Activated B cell treated with CpG ODN at 0.5 μM for 24 hours (primary cell): ENCODE measurements at regions of chr2 and their contacts with region 1.

Region 1: GRCh38 chr2:135985018-135985825 is at the start of gene DARS1:
- DNase-seq: peak; percentile 80
- ATAC-seq: peak; percentile 86
- H3K4me3 Mint-ChIP-seq: peak within 1 kb of the TSS; percentile 95
- H3K27ac Mint-ChIP-seq: peak within 1 kb of the TSS; percentile 97
- H3K4me1 Mint-ChIP-seq: peaks cover 50% of the 10 kb centered on the region
- H3K27me3 Mint-ChIP-seq: no peaks in the 10 kb centered on the region
- CTCF ChIP-seq: no peak
- total RNA-seq, gene DARS1: 96.3 and 103 TPM in 2 replicates

Region 2: GRCh38 chr2:135531231-135532228 is 453.7 kb before region 1 on chr2 and contains the start of gene R3HDM1:
- CTCF ChIA-PET with region 1: no interaction called
- POLR2A ChIA-PET with region 1: no interaction called
- intact Hi-C with region 1: loop called (anchors 10 kb)
- DNase-seq: peak; percentile 82
- ATAC-seq: peak; percentile 81
- H3K4me3 Mint-ChIP-seq: no peak within 1 kb of the TSS
- H3K27ac Mint-ChIP-seq: peak within 1 kb of the TSS; percentile 68
- H3K4me1 Mint-ChIP-seq: peaks cover 18% of the 10 kb centered on the region
- H3K27me3 Mint-ChIP-seq: no peaks in the 10 kb centered on the region
- CTCF ChIP-seq: no peak
- total RNA-seq, gene R3HDM1: 49.8 and 54.8 TPM in 2 replicates

Region 3: DNA sequence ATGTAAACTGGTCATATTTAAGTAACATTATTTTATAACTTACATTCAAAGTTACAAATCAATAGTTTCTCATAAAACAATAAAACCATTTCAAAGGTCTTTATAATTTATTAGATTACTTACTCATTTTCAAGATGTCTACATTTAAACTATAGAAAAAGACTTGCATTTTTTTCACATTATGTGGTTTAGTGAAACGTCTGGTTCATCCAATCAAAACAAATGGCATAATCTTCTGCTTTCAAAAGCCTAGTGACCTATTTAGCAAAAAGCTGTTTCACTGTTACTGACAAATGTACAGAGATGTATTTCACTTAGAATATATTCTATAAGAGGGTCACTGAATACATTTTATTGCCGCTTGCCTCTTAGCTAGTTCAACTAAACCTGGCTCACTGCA is 59.7 kb before region 1 on chr2:
- CTCF ChIA-PET with region 1: no interaction called
- POLR2A ChIA-PET with region 1: no interaction called
- intact Hi-C with region 1: no loop called
- DNase-seq: no peak
- ATAC-seq: no peak
- H3K4me3 Mint-ChIP-seq: no peak overlapping the region
- H3K27ac Mint-ChIP-seq: no peak overlapping the region
- H3K4me1 Mint-ChIP-seq: no peaks in the 10 kb centered on the region
- H3K27me3 Mint-ChIP-seq: no peaks in the 10 kb centered on the region
- CTCF ChIP-seq: no peak

Region 4: GRCh38 chr2:135948642-135949355 is 36.4 kb before region 1 on chr2:
- CTCF ChIA-PET with region 1: no interaction called
- POLR2A ChIA-PET with region 1: interaction called, 4 read pairs
- intact Hi-C with region 1: loop called (anchors 5 kb)
- DNase-seq: no peak
- ATAC-seq: peak; percentile 54
- H3K4me3 Mint-ChIP-seq: no peak overlapping the region
- H3K27ac Mint-ChIP-seq: peak overlapping the region; percentile 75
- H3K4me1 Mint-ChIP-seq: peaks cover 50% of the 10 kb centered on the region
- H3K27me3 Mint-ChIP-seq: no peaks in the 10 kb centered on the region
- CTCF ChIP-seq: no peak

Region 5: GRCh38 chr2:136008205-136008865 is 23.1 kb after region 1 on chr2:
- CTCF ChIA-PET with region 1: no interaction called
- POLR2A ChIA-PET with region 1: interaction called, 10 read pairs
- intact Hi-C with region 1: no loop called
- DNase-seq: peak; percentile 46
- ATAC-seq: peak; percentile 93
- H3K4me3 Mint-ChIP-seq: peak overlapping the region; percentile 52
- H3K27ac Mint-ChIP-seq: peak overlapping the region; percentile 90
- H3K4me1 Mint-ChIP-seq: peaks cover 66% of the 10 kb centered on the region
- H3K27me3 Mint-ChIP-seq: no peaks in the 10 kb centered on the region
- CTCF ChIP-seq: no peak

Region 6: GRCh38 chr2:136238286-136239078 is 253.3 kb after region 1 on chr2:
- CTCF ChIA-PET with region 1: no interaction called
- POLR2A ChIA-PET with region 1: interaction called, 9 read pairs
- intact Hi-C with region 1: loop called (anchors 2 kb)
- DNase-seq: peak; percentile 38
- ATAC-seq: peak; percentile 77
- H3K4me3 Mint-ChIP-seq: peak overlapping the region; percentile 24
- H3K27ac Mint-ChIP-seq: peak overlapping the region; percentile 92
- H3K4me1 Mint-ChIP-seq: peaks cover 91% of the 10 kb centered on the region
- H3K27me3 Mint-ChIP-seq: no peaks in the 10 kb centered on the region
- CTCF ChIP-seq: no peak